Cardiac septum (tissue), 1 donor: ENCODE measurements at regions of chr9 and their contacts with region 1.

Region 1: DNA sequence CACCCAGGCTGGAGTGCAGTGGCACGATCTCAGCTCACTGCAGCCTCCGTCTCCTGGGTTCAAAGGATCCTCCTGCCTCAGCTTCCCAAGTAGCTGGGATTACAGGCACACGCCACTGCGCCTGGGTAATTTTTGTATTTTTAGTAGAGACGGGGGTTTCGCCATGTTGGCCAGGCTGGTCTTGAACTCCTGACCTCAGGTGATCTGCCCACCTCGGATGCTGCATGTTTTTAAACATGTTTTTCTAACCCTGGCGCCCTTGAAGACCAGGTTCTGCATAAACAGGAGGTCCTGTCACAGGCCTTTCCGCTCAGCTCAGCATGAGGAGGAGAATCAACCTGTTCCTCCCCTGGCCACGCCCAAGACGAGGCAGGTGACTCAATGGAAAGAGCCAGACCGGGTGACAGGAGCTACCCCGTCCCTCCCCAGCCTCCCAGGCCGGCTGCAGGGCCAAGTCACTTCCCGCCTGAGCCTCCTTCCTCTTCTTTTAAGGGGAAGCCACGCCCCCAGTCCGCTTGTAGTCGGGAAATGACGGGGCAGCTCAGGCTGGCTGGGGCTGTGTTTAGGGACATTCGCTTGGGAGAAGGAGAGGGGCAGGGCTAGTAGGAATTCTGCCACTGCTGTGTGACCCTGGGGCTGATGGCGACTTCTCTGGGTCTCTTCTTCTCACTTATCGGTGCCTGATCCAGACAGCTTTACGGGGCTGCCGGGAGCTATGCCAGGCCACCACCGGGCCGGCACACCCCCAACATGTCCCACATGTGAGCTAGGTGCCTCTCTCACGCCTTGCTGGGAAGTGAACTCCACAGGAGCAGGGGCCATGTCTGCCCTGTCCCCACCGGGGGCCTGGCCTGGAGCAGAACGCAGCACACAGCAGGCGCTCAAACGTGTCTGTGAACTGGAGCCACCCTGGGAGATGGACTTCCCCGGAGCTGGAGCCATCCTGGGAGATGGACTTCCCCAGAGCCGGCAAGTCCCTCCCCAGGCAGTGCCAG is 6.1 kb downstream of the NOTCH1 start:
- DNase-seq: peak; percentile 99

Region 2: GRCh38 chr9:136493567-136493971 is 46.2 kb before region 1 on chr9:
- intact Hi-C with region 1: loop called (anchors 5 kb)
- DNase-seq: no peak